MCF 10A (cell line): ENCODE measurements at regions of chr3 and their contacts with region 1.

Region 1: DNA sequence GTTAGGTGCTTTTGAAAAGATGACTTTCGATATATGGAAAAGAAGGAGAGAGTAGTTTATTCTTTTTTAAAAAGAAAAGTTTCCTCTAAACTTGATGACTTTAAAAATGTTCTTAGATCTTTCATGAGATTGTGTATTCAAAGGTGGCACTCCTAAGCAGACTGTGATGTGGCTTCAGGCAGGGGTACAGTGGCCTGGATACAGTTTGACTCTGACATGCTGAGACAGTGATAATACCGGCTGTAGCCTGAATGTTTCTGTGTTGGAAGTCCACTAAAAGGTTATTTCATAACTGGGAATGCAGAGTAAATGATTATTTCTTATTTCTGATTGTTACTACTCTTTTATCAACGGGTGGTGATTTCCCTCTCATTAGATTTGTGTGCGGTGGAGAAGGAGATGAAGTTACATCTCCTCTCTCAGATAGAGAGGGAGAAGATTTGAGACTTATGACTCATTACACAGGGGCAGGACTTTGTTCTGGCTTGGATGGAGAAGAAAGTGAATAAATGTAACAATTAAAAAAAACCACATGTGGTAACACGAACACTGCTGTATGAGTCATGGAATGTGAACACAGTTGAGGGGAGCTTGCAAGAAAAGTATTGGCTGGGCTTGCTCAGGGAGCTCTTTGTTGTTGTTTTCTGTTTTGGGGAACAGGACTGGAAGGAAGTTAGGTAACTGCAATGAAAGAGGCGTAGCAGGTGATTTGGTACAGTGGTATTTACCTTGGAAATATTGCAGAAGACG is 21.6 kb downstream of the SPTSSB start:
- DNase-seq: peak; percentile 97
- H3K4me3 Mint-ChIP-seq: peak overlapping the region; percentile 2
- H3K27ac Mint-ChIP-seq: peak overlapping the region; percentile 29
- H3K4me1 Mint-ChIP-seq: peaks cover 33% of the 10 kb centered on the region
- H3K27me3 Mint-ChIP-seq: no peaks in the 10 kb centered on the region
- CTCF ChIP-seq: no peak

Region 2: DNA sequence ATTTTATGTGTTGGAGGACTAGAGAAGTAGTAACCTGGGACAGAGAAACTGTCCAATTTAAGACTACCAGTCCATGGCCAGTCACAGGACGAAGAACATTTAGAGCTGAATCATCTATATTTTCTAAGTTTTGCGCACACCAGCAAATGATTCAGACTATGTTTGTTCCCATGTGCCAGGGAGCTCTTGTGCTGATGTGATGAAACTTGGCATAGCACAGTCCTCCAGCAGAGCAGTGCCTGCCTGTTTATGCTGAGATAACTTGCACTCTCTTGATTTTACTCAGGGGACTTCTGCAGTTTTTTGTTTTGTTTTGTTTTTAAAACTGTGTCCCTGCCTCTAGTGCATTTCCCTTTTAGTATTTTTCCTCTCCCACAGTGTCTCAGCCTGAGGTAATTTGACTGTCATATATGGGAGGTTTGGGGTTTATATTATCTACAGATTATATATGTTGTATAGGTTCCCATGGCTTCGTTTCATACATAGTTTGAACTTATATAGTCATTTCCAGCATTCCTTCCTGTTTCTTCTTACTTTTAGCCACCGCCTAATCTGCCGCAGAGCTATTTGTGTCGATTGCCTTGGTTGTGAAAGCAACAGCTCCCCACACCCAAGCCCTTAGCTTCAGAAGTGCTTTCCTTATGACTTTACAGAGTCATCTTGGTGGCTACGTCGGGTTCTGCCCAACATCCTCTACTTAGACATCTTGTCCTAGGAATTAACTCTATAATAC is 548.2 kb before region 1 on chr3:
- CTCF ChIA-PET with region 1: no interaction called
- POLR2A ChIA-PET with region 1: no interaction called
- intact Hi-C with region 1: no loop called
- DNase-seq: peak; percentile 76
- H3K4me3 Mint-ChIP-seq: peak overlapping the region; percentile 18
- H3K27ac Mint-ChIP-seq: peak overlapping the region; percentile 37
- H3K4me1 Mint-ChIP-seq: peaks cover 22% of the 10 kb centered on the region
- H3K27me3 Mint-ChIP-seq: no peaks in the 10 kb centered on the region
- CTCF ChIP-seq: no peak

Region 3: DNA sequence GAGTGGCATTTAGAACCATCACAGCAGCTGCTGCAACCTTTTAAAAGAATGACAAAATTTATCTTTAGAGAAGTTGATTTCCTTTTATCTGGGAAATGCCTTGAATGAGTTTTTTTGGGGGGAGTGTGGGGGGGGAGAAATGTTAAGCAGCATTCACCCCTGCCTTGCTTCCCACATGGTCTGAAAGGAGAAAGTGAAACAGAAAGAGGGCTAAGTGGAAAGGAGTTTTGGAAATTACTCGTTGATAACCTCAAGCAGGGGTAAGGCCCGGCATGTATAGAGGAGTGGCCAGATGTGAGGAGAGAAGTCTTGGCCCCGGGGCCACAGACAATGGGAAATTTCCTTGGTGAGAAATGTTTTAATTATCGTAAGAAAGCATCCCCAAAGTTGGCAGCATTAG is 268.1 kb before region 1 on chr3:
- CTCF ChIA-PET with region 1: no interaction called
- POLR2A ChIA-PET with region 1: no interaction called
- intact Hi-C with region 1: no loop called
- DNase-seq: no peak
- H3K4me3 Mint-ChIP-seq: no peak overlapping the region
- H3K27ac Mint-ChIP-seq: no peak overlapping the region
- H3K4me1 Mint-ChIP-seq: no peaks in the 10 kb centered on the region
- H3K27me3 Mint-ChIP-seq: no peaks in the 10 kb centered on the region
- CTCF ChIP-seq: no peak

Region 4: DNA sequence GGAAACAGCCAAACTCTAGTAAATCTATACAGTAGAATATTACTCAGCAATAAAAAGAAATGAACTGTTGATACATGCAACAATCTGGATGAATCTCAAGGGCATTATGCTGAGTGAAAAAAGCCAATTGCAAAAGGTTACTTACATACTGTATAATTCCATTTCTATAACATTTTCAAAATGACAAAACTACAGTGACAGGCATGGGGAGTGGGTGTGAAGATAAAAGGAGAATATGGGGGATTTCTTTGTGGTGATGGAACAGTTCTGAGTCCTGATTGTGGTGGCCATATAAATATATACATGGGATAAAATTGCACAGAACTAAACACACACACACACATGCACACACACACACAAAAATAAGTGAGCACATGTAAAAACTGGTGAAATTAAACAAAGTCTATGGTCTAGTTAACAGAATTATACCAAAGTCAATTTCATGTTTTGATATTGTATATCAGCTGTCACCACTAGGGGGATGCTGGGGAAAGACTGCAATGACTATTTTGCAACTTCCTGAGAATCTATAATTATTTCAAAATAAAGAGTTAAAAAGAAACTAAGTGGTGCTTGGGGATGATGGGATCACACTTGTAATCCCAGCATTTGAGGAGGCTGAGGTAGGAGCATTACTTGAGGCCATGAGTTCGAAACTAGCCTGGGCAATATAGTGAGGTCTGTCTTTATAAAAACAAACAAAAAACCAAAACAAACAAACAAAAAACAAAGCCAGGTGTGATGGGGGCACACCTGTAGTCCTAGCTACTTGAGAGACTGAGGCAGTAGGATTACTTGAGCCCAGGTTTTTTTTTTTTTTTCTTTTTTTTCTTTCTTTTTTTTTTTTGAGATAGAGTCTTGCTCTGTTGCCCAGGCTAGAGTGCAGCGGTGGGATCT is 44.4 kb before region 1 on chr3:
- CTCF ChIA-PET with region 1: interaction called, 7 read pairs
- POLR2A ChIA-PET with region 1: no interaction called
- intact Hi-C with region 1: loop called (anchors 5 kb)
- DNase-seq: peak; percentile 42
- H3K4me3 Mint-ChIP-seq: no peak overlapping the region
- H3K27ac Mint-ChIP-seq: no peak overlapping the region
- H3K4me1 Mint-ChIP-seq: no peaks in the 10 kb centered on the region
- H3K27me3 Mint-ChIP-seq: no peaks in the 10 kb centered on the region
- CTCF ChIP-seq: peak; percentile 66

Region 5: GRCh38 chr3:161371430-161372326 is 22.0 kb after region 1 on chr3 and contains the start of gene SPTSSB:
- CTCF ChIA-PET with region 1: interaction called, 4 read pairs
- POLR2A ChIA-PET with region 1: interaction called, 11 read pairs
- intact Hi-C with region 1: no loop called
- DNase-seq: peak; percentile 67
- H3K4me3 Mint-ChIP-seq: peak within 1 kb of the TSS; percentile 75
- H3K27ac Mint-ChIP-seq: no peak within 1 kb of the TSS
- H3K4me1 Mint-ChIP-seq: peaks cover 6% of the 10 kb centered on the region
- H3K27me3 Mint-ChIP-seq: no peaks in the 10 kb centered on the region
- CTCF ChIP-seq: no peak
- total RNA-seq, gene SPTSSB: not detected in 2 replicates

Region 6: DNA sequence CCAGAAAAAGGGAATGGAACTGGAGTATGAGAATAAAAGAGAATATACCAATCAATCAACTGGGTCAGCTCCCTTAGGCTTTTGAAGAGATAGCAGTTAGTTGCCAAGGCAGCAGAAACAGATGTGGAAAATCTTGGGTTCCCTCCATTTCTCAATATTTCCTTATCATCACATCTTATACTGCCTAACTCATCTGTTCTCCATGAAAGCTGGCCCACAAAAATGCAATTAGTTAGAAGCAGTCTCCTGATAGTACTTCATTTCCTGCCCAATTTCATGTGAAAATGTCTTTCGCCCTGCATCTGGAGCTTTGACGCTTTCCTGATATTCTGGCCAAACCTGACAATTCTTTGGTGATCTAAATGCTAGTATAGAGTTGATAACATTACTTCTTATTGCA is 51.7 kb after region 1 on chr3:
- CTCF ChIA-PET with region 1: interaction called, 5 read pairs
- POLR2A ChIA-PET with region 1: interaction called, 7 read pairs
- intact Hi-C with region 1: loop called (anchors 5 kb)
- DNase-seq: no peak
- H3K4me3 Mint-ChIP-seq: no peak overlapping the region
- H3K27ac Mint-ChIP-seq: no peak overlapping the region
- H3K4me1 Mint-ChIP-seq: peaks cover 5% of the 10 kb centered on the region
- H3K27me3 Mint-ChIP-seq: no peaks in the 10 kb centered on the region
- CTCF ChIP-seq: no peak

Region 7: DNA sequence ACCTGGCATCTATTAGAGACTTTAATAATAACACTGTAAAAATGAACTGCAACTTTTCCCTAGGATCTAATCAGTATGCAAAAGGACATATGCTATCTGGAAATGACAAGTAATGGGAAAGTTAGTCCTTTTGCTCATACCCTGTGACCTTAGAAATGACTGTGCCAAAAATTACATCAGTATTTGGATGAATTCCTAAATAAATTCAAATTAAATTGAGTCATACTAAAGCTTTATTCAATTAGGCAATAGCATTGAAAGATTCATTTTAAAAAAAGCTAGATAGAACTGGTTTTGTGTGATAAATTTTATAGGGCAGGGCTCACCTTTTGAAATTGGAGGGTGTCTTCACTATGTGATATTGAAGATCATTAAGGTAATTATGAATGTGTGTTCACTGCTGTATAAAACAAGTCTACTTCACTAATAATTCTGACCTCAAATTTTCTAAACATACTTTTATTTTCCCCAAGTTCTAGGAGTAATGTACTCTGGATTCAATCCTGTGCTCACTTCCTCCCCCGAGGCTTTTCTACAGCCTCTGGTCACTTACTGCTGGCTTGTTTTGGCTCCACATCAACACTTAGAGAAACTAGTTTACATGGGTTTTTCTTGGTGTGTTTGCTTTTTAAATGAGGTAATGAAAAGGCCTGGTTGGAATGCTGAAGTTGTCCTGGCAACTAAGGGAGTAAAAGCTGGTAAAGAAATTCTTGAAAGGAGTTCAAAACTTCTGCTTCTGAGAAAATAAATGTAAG is 66.0 kb after region 1 on chr3:
- CTCF ChIA-PET with region 1: interaction called, 3 read pairs
- POLR2A ChIA-PET with region 1: interaction called, 4 read pairs
- intact Hi-C with region 1: loop called (anchors 2 kb)
- DNase-seq: peak; percentile 83
- H3K4me3 Mint-ChIP-seq: peak overlapping the region; percentile 3
- H3K27ac Mint-ChIP-seq: peak overlapping the region; percentile 88
- H3K4me1 Mint-ChIP-seq: peaks cover 29% of the 10 kb centered on the region
- H3K27me3 Mint-ChIP-seq: no peaks in the 10 kb centered on the region
- CTCF ChIP-seq: no peak